ENCODE measurements at regions of chr10 and their contacts with region 1.

Region 1: DNA sequence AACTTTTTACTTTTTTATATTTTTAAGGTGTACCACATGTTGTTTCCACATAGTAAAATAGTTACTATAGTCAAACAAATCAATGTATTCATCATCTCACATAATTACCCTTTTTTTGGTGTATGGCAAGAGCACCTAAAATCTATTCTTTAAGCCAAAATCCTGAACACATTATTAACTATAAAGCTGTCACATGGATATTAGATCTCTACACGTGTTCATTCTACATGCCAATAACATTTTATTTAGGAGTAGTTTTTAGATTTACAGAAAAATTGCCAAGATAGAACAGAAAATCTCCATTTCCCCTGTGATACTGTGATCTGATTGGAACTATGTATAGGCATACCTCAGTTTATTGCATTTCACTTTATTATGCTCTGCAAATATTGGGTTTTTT is 137.1 kb downstream of the SH2D4B start:
- DNase-seq: no peak
- ATAC-seq: no peak
- H3K4me3 Mint-ChIP-seq: no peak overlapping the region
- H3K27ac Mint-ChIP-seq: no peak overlapping the region
- H3K4me1 Mint-ChIP-seq: no peaks in the 10 kb centered on the region
- H3K27me3 Mint-ChIP-seq: peaks cover 4% of the 10 kb centered on the region

Region 2: DNA sequence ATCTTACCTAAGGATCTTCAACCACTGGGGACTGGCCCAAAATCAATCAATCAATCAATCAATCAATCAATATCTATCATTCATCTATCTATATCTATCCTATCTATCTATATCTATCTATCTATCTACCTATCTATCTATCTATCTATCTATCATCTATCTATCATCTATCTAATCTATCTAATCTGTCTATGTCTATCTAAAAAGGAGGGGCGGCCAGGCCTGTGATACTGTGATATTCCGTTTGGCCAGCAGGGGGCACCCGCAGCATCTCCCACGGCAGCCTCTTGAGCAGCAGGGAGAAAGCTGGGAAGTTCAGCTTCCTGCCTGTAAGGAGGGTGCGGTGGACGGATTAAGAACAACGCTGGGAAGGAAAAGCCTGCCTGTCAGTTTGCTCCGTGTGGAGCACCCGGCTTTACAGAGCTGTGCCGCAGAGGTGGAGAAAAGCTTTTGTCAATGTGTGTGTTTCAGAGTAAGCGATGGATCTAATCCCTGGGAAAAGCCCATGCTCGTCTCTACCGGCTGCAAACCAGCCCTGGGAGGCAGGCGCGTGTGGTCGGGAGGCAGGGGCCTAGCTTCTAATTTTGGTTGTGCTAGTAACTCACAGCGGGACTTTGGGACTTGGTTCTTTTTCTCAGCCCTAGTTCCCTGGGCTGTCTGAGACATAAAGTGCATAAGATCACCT is 12.1 kb before region 1 on chr10:
- CTCF ChIA-PET with region 1: interaction called, 16 read pairs
- POLR2A ChIA-PET with region 1: no interaction called
- DNase-seq: peak; percentile 77
- ATAC-seq: peak; percentile 73
- H3K4me3 Mint-ChIP-seq: no peak overlapping the region
- H3K27ac Mint-ChIP-seq: no peak overlapping the region
- H3K4me1 Mint-ChIP-seq: no peaks in the 10 kb centered on the region
- H3K27me3 Mint-ChIP-seq: peaks cover 2% of the 10 kb centered on the region